Activated CD4-positive, alpha-beta memory T cell treated with anti-CD3 and anti-CD28 coated beads for 36 hours (primary cell): ENCODE measurements at regions of chr17 and their contacts with region 1.

Region 1: GRCh38 chr17:74296548-74296936 is 22.5 kb downstream of the DNAI2 start:
- DNase-seq: peak; percentile 73
- H3K4me3 Mint-ChIP-seq: no peak overlapping the region
- H3K27ac Mint-ChIP-seq: no peak overlapping the region
- H3K4me1 Mint-ChIP-seq: peaks cover 28% of the 10 kb centered on the region
- H3K27me3 Mint-ChIP-seq: no peaks in the 10 kb centered on the region

Region 2: GRCh38 chr17:73936908-73937627 is 359.5 kb before region 1 on chr17:
- CTCF ChIA-PET with region 1: no interaction called
- POLR2A ChIA-PET with region 1: no interaction called
- intact Hi-C with region 1: no loop called
- DNase-seq: no peak
- H3K4me3 Mint-ChIP-seq: no peak overlapping the region
- H3K27ac Mint-ChIP-seq: no peak overlapping the region
- H3K4me1 Mint-ChIP-seq: no peaks in the 10 kb centered on the region
- H3K27me3 Mint-ChIP-seq: no peaks in the 10 kb centered on the region

Region 3: GRCh38 chr17:74212913-74213791 is 83.4 kb before region 1 on chr17 and contains the start of gene TTYH2:
- CTCF ChIA-PET with region 1: interaction called, 37 read pairs
- POLR2A ChIA-PET with region 1: no interaction called
- intact Hi-C with region 1: loop called (anchors 1 kb)
- DNase-seq: peak; percentile 82
- H3K4me3 Mint-ChIP-seq: peak within 1 kb of the TSS; percentile 74
- H3K27ac Mint-ChIP-seq: peak within 1 kb of the TSS; percentile 36
- H3K4me1 Mint-ChIP-seq: peaks cover 68% of the 10 kb centered on the region
- H3K27me3 Mint-ChIP-seq: no peaks in the 10 kb centered on the region
- total RNA-seq, gene TTYH2: 7.6 to 7.9 TPM

Region 4: DNA sequence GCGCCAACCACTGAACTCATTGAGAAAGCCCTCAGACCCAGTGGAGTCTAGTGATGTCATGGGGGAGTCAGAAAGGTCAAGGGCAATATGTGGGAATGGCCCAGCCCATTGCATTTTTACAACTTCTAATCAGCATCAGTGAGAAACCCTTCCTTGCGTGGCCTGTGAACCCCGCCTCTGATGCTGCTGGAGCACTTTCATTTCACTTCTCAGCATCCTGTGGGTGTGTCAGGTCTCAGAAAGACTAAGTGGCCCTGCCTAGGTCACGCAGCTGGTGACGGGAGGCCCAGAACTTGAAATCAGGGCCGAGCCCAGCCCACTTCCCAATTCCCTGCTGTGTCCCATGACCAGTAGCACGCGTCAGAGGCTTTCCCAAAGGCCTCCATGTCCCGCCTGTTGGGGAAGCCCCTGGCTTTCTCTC is 16.4 kb before region 1 on chr17:
- CTCF ChIA-PET with region 1: interaction called, 32 read pairs
- POLR2A ChIA-PET with region 1: interaction called, 3 read pairs
- intact Hi-C with region 1: loop called (anchors 2 kb)
- DNase-seq: peak; percentile 86
- H3K4me3 Mint-ChIP-seq: peak overlapping the region; percentile 12
- H3K27ac Mint-ChIP-seq: peak overlapping the region; percentile 90
- H3K4me1 Mint-ChIP-seq: peaks cover 69% of the 10 kb centered on the region
- H3K27me3 Mint-ChIP-seq: no peaks in the 10 kb centered on the region

Region 5: GRCh38 chr17:74325743-74326379 is 29.3 kb after region 1 on chr17 and contains the start of gene KIF19:
- CTCF ChIA-PET with region 1: interaction called, 11 read pairs
- POLR2A ChIA-PET with region 1: no interaction called
- intact Hi-C with region 1: loop called (anchors 2 kb)
- DNase-seq: peak; percentile 72
- H3K4me3 Mint-ChIP-seq: peak within 1 kb of the TSS; percentile 24
- H3K27ac Mint-ChIP-seq: no peak within 1 kb of the TSS
- H3K4me1 Mint-ChIP-seq: peaks cover 26% of the 10 kb centered on the region
- H3K27me3 Mint-ChIP-seq: peaks cover 2% of the 10 kb centered on the region
- total RNA-seq, gene KIF19: 0.51 to 0.59 TPM

Region 6: GRCh38 chr17:74354123-74354522 is 57.6 kb after region 1 on chr17:
- CTCF ChIA-PET with region 1: interaction called, 23 read pairs
- POLR2A ChIA-PET with region 1: no interaction called
- intact Hi-C with region 1: loop called (anchors 1 kb)
- DNase-seq: peak; percentile 85
- H3K4me3 Mint-ChIP-seq: no peak overlapping the region
- H3K27ac Mint-ChIP-seq: no peak overlapping the region
- H3K4me1 Mint-ChIP-seq: peaks cover 8% of the 10 kb centered on the region
- H3K27me3 Mint-ChIP-seq: peaks cover 60% of the 10 kb centered on the region

Region 7: DNA sequence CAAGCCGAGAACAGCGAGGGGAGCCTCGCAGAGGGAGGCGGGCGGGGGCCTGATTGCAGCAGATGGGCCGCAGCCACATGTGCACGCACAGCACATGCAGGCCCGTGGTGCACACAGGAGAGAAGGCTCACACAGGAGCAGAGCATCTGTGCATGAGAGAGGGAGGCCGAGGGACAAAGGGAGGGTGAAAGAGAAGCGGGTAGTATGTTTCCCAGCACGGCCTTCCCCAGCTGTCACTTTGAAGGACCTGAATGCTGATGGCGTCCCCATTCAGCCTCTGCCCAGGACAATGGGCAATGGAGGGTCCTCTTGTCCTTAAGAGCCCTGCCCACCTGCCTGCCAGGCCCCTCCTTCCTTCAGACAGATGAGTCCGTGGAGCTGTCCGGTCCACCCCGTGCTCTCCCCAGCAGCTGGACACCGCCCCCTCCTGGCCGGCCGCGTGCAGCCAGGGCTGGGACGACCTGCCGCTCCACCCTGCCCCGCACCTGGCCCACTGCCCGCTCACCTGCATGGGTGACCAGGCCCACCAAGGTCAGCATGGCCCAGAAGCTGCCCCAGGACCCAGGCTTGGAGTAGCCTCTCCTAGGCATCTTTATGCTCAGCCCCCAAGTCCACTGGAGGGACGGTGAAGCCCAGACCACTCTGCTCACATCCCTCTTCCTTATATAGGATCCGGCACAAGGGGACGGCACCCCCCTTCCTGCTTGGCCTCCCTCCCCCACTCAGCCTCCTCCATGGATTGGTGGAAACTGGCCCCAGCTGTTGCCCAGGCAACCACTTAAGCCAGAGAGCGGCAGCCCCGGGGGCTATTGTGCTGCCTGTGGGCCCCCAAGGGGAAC is 64.9 kb after region 1 on chr17 and contains the start of gene BTBD17:
- CTCF ChIA-PET with region 1: interaction called, 23 read pairs
- POLR2A ChIA-PET with region 1: no interaction called
- intact Hi-C with region 1: no loop called
- DNase-seq: peak; percentile 63
- H3K4me3 Mint-ChIP-seq: no peak within 1 kb of the TSS
- H3K27ac Mint-ChIP-seq: no peak within 1 kb of the TSS
- H3K4me1 Mint-ChIP-seq: peaks cover 2% of the 10 kb centered on the region
- H3K27me3 Mint-ChIP-seq: peaks cover 23% of the 10 kb centered on the region
- total RNA-seq, gene BTBD17: not detected